Activated CD4-positive, alpha-beta memory T cell treated with anti-CD3 and anti-CD28 coated beads for 36 hours (primary cell): ENCODE measurements at regions of chr3 and their contacts with region 1.

Region 1: DNA sequence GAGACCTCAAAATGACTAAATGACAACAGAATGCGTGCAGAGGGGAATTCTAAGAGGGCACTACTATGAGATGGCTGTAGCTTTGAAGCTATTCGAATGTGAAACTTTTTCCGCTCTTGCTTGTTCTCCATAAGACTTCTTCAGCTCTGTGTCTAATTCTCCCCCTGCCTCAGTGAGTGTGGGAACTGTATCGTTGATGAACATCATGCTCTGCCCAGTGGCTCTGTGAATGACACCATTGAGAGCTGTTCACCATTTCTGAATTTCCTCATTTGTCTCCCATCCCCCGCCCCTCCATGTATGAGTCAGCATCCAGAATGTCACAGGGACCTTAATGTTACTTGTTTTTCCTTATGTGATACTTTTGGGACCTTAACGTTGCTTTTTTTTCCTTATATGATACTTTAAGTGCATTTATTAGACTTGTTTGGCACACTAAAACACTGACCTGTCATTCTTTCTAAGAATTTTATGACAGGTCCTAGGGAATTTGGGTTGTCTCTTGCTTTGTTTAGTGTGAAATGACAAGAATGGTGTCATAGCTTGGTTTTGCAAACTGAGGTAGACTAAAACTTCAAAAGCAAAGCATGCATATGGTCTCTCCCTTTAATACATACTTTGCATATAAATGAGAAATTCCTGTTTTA is 99.5 kb downstream of the FNDC3B start:
- DNase-seq: peak; percentile 66
- H3K4me3 Mint-ChIP-seq: peak overlapping the region; percentile 33
- H3K27ac Mint-ChIP-seq: peak overlapping the region; percentile 71
- H3K4me1 Mint-ChIP-seq: peaks cover 56% of the 10 kb centered on the region
- H3K27me3 Mint-ChIP-seq: no peaks in the 10 kb centered on the region

Region 2: GRCh38 chr3:172094621-172095557 is 44.0 kb before region 1 on chr3:
- CTCF ChIA-PET with region 1: no interaction called
- POLR2A ChIA-PET with region 1: no interaction called
- intact Hi-C with region 1: loop called (anchors 2 kb)
- DNase-seq: peak; percentile 55
- H3K4me3 Mint-ChIP-seq: no peak overlapping the region
- H3K27ac Mint-ChIP-seq: peak overlapping the region; percentile 13
- H3K4me1 Mint-ChIP-seq: peaks cover 49% of the 10 kb centered on the region
- H3K27me3 Mint-ChIP-seq: no peaks in the 10 kb centered on the region

Region 3: DNA sequence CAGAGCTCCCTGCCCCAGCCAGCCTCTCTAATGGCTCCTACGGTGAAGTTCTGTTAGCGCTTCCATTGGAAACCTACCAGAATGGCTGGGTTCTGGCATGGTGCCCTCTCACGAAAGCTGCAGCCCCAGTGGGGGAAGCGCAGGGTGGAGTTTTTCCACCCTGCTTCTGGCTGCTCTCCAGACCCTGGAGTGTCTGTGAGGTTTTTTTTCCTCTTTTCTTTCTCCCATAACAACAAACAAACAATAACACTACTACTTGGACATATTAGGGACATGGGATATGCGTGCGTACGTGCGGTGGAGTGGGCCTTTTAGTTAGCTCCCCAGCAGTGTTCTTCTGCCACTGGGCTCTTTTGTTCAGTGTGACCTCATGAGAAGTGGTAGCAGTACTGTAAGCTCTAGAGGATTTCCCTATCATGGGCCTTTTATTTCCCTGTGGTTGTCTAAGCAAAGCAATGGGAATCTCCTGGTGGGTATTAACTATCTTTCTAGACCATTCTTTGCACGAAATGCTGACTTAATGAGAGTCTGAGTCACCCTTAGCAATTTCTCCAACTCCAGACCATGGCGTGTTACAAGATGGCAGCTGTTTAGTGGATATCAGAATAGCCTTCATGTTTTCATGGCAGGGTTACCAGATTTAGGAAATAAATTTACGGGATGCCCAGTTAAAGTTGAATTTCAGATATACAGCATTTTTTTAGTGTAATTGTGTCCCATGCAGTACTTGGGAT is 62.4 kb after region 1 on chr3:
- CTCF ChIA-PET with region 1: no interaction called
- POLR2A ChIA-PET with region 1: no interaction called
- intact Hi-C with region 1: no loop called
- DNase-seq: no peak
- H3K4me3 Mint-ChIP-seq: no peak overlapping the region
- H3K27ac Mint-ChIP-seq: no peak overlapping the region
- H3K4me1 Mint-ChIP-seq: no peaks in the 10 kb centered on the region
- H3K27me3 Mint-ChIP-seq: no peaks in the 10 kb centered on the region

Region 4: DNA sequence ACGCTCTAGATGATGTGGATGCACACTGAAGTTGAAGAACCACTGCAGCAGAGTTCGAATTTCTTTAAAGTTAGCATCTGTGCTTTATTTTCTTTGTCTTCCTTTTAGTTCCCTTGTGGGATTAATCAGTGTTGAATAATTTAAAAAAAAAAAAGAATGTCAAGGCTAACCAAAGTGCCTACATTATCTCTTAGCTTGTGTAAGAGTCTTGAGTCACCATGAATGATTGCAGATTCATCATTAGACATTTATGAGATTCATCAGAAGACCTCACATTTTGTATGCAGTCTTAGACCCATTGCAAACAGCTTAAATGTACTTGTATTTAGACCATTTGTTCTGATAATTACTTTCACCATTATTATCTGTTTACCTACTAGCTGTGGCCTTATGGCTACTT is 82.6 kb after region 1 on chr3:
- CTCF ChIA-PET with region 1: no interaction called
- POLR2A ChIA-PET with region 1: no interaction called
- intact Hi-C with region 1: no loop called
- DNase-seq: no peak
- H3K4me3 Mint-ChIP-seq: no peak overlapping the region
- H3K27ac Mint-ChIP-seq: no peak overlapping the region
- H3K4me1 Mint-ChIP-seq: peaks cover 16% of the 10 kb centered on the region
- H3K27me3 Mint-ChIP-seq: no peaks in the 10 kb centered on the region